Body of pancreas (tissue), 4 donors: ENCODE measurements at regions of chr1 and their contacts with region 1.

Region 1: DNA sequence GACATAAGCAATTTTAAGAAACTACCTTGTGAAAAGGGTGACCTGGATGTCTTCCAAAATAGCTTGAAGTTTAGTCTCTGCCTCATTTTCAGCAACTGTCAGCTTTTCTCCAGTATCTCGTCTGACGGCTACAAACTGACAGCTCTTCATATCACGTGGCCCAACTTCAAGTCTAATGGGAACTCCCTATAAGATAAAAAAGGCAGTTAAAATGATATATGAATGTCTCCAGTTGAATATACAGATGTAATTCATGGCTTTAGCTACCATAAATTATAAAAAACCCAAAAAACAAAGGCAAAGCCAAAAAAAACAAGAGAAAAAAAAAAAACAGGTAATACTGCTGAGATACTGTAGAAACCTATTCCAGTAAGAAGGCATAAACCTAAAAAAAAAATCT is 44.9 kb upstream of the SLC30A10 start:
- DNase-seq: no peak
- ATAC-seq: no peak
- H3K4me3 ChIP-seq: no peak overlapping the region
- H3K27ac ChIP-seq: no peak overlapping the region
- H3K4me1 ChIP-seq: no peaks in the 10 kb centered on the region
- H3K27me3 ChIP-seq: no peaks in the 10 kb centered on the region
- CTCF ChIP-seq: no peak
- POLR2A ChIP-seq: no peak

Region 2: DNA sequence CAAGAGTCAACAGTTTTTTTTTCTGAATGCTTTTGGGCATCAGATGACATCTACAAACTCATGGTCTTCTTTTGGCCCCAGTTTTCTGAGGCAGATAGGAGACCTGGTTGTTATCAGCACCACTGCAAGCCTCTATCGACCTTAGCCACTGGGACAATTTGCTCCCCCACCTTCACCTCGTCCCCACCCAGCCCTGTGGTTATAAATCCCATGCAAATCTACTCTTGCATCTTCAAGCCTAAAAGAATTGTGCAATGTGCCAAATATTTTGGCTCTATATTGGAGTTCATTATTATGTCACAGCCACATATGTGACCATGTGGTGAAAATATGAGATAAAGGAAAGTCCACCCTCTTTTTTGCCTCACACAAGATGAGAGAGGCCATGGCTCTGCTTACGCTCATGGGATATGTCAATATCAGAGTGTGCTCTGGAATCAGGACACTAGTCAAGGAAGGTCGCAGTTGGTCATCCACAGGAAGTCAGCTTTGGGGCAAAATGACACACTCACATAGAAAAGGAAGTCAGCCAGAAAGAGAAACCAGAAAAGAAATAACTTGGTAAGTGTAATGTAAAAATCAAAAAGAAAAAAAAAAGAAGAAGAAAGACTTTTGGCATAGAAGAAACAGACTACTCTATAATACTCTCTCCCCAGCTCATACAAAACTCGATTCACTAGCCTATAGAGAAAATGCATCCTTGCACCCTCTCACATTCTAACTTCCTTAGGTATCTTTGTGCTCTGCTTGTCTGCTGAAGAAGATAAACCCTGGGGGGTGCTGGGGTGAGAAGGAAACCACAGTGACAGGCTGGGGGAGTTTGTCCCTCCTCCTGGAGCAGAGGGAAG is 66.1 kb before region 1 on chr1:
- intact Hi-C with region 1: no loop called
- DNase-seq: no peak
- ATAC-seq: no peak
- H3K4me3 ChIP-seq: no peak overlapping the region
- H3K27ac ChIP-seq: no peak overlapping the region
- H3K4me1 ChIP-seq: no peaks in the 10 kb centered on the region
- H3K27me3 ChIP-seq: no peaks in the 10 kb centered on the region
- CTCF ChIP-seq: no peak
- POLR2A ChIP-seq: no peak

Region 3: DNA sequence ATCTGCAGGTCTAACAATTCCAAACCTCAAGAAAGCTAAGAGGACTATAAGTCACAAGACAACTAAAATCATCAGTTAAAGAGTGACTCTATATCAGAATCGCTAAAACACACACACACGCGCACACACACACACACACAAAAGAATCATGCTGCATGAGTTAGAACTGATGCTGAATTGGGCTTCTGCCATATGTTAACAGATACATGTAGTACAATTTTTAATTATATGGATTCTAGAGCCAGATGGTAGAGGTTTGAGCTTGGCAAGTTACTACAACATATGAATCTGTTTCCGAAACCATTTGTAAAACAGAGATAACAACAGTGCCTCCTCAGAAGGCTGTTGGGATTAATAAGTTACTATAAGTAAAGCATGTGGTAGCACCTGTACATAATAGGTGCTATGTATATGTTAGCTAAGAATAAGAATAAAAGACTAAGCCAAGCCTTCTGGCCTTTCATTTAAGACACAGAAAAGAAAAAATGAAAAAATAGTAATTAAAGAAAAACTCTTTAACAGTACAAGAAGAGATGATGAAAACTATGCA is 55.2 kb after region 1 on chr1:
- intact Hi-C with region 1: loop called (anchors 10 kb)
- DNase-seq: no peak
- ATAC-seq: no peak
- H3K4me3 ChIP-seq: no peak overlapping the region
- H3K27ac ChIP-seq: no peak overlapping the region
- H3K4me1 ChIP-seq: no peaks in the 10 kb centered on the region
- H3K27me3 ChIP-seq: no peaks in the 10 kb centered on the region
- CTCF ChIP-seq: no peak
- POLR2A ChIP-seq: no peak